GM12878 (cell line): ENCODE measurements at regions of chr4 and their contacts with region 1.

Region 1: GRCh38 chr4:147096667-147097604 is 151.3 kb upstream of the TTC29 start:
- DNase-seq: no peak
- ATAC-seq: peak; percentile 64
- H3K4me3 ChIP-seq: no peak overlapping the region
- H3K27ac ChIP-seq: no peak overlapping the region
- H3K4me1 ChIP-seq: no peaks in the 10 kb centered on the region
- H3K27me3 ChIP-seq: peaks cover 0 to 1% of the 10 kb centered on the region in 2 experiments; a peak in 2 of 4 replicates
- CTCF ChIP-seq: peak; percentile 32 to 66 (median 43); a peak in 5 of 6 replicates
- EP300 ChIP-seq: no peak
- POLR2A ChIP-seq: no peak
- RAD21 ChIP-seq: peak; percentile 86

Region 2: GRCh38 chr4:146333187-146333894 is 763.6 kb before region 1 on chr4:
- CTCF ChIA-PET with region 1: interaction called, 3 read pairs
- POLR2A ChIA-PET with region 1: no interaction called
- RAD21 ChIA-PET with region 1: interaction called, 5 read pairs
- SMC1A ChIA-PET with region 1: interaction called, 4 read pairs
- in situ Hi-C with region 1: loop called (anchors 10 kb)
- intact Hi-C with region 1: no loop called
- DNase-seq: peak; percentile 59
- ATAC-seq: peak; percentile 88
- H3K4me3 ChIP-seq: peak overlapping the region; percentile 54
- H3K27ac ChIP-seq: peak overlapping the region; percentile 38
- H3K4me1 ChIP-seq: peaks cover 13% of the 10 kb centered on the region; the same call in 1 of the 2 replicates
- H3K27me3 ChIP-seq: no peaks in the 10 kb centered on the region
- CTCF ChIP-seq: no peak
- EP300 ChIP-seq: no peak
- POLR2A ChIP-seq: no peak
- RAD21 ChIP-seq: no peak

Region 3: DNA sequence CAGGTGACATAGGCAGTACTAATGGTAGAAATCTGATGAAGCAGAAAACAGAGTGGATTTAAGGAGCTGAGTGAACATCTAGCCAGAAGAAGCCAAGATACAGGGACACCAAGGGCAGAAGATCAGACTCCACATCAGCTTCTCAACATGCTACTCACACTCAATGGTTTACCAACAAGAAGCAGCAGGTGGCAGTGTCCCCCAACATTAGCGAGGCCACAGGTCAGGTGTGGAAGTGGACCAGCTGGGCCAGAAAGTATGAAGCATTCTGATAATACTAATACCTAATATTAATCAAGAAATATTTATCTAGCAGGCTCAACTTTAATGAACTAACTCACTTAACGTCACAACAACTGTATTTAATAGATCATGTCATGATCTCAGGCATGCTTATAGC is 77.9 kb before region 1 on chr4:
- CTCF ChIA-PET with region 1: interaction called, 125 read pairs
- POLR2A ChIA-PET with region 1: no interaction called
- RAD21 ChIA-PET with region 1: interaction called, 51 read pairs
- SMC1A ChIA-PET with region 1: interaction called, 61 read pairs
- in situ Hi-C with region 1: loop called (anchors 5 kb)
- intact Hi-C with region 1: loop called (anchors 1 kb)
- DNase-seq: no peak
- ATAC-seq: peak; percentile 97
- H3K4me3 ChIP-seq: no peak overlapping the region
- H3K27ac ChIP-seq: no peak overlapping the region
- H3K4me1 ChIP-seq: no peaks in the 10 kb centered on the region
- H3K27me3 ChIP-seq: no peaks in the 10 kb centered on the region; a peak in 1 of 4 replicates
- CTCF ChIP-seq: peak; percentile 64 to 78 (median 71)
- EP300 ChIP-seq: no peak
- POLR2A ChIP-seq: no peak
- RAD21 ChIP-seq: peak; percentile 90

Region 4: DNA sequence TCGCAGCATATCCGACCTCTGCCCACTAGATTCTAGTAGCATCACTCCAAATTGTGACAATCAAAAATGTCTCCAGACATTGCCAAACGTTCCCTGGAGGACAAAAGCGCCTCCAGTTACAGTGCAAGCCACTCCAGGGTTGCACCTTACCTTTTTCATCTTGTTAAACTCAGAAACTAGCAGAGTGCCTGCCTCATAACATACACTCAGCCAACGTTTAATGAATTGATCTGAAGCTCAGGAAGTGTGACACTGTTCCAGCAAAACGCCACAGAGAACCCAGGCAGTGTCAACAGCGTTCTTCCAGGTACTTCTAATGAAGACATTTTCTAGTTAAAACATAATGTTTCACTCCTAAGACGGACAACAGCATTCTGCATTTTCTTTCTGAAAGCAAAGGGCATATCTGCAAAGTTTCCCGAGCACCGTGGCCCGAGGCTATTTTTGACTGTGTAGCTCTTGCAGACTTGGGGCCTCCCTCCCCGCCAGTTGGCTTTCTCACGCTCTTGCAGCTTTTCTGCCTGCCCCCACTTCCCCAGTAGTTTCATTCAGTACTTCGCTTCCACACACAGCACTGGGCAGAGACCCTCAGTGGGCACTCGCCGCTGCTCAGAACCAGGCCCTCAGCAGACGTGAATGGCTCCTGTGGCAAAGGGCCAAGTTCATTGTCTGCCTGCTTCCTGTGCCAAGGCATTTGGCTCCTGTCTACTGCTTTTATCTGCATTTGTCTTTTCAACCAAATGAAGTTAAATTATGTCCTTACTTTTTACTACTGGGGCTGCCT is 17.9 kb before region 1 on chr4:
- CTCF ChIA-PET with region 1: interaction called, 15 read pairs
- POLR2A ChIA-PET with region 1: no interaction called
- RAD21 ChIA-PET with region 1: no interaction called
- SMC1A ChIA-PET with region 1: interaction called, 4 read pairs
- in situ Hi-C with region 1: no loop called
- intact Hi-C with region 1: no loop called
- DNase-seq: no peak
- ATAC-seq: no peak
- H3K4me3 ChIP-seq: no peak overlapping the region
- H3K27ac ChIP-seq: no peak overlapping the region
- H3K4me1 ChIP-seq: no peaks in the 10 kb centered on the region
- H3K27me3 ChIP-seq: no peaks in the 10 kb centered on the region; a peak in 1 of 4 replicates
- CTCF ChIP-seq: no peak
- EP300 ChIP-seq: no peak
- POLR2A ChIP-seq: no peak
- RAD21 ChIP-seq: no peak

Region 5: GRCh38 chr4:147111033-147111367 is 14.1 kb after region 1 on chr4:
- CTCF ChIA-PET with region 1: interaction called, 19 read pairs
- POLR2A ChIA-PET with region 1: no interaction called
- RAD21 ChIA-PET with region 1: interaction called, 3 read pairs
- SMC1A ChIA-PET with region 1: interaction called, 3 read pairs
- in situ Hi-C with region 1: no loop called
- intact Hi-C with region 1: no loop called
- DNase-seq: no peak
- ATAC-seq: no peak
- H3K4me3 ChIP-seq: no peak overlapping the region
- H3K27ac ChIP-seq: no peak overlapping the region
- H3K4me1 ChIP-seq: no peaks in the 10 kb centered on the region
- H3K27me3 ChIP-seq: no peaks in the 10 kb centered on the region
- CTCF ChIP-seq: no peak
- EP300 ChIP-seq: no peak
- POLR2A ChIP-seq: no peak
- RAD21 ChIP-seq: no peak

Region 6: GRCh38 chr4:147207911-147208310 is 111.0 kb after region 1 on chr4:
- CTCF ChIA-PET with region 1: no interaction called
- POLR2A ChIA-PET with region 1: no interaction called
- RAD21 ChIA-PET with region 1: no interaction called
- SMC1A ChIA-PET with region 1: no interaction called
- in situ Hi-C with region 1: no loop called
- intact Hi-C with region 1: no loop called
- DNase-seq: no peak
- ATAC-seq: no peak
- H3K4me3 ChIP-seq: no peak overlapping the region
- H3K27ac ChIP-seq: no peak overlapping the region
- H3K4me1 ChIP-seq: no peaks in the 10 kb centered on the region
- H3K27me3 ChIP-seq: no peaks in the 10 kb centered on the region
- CTCF ChIP-seq: no peak
- EP300 ChIP-seq: no peak
- POLR2A ChIP-seq: no peak
- RAD21 ChIP-seq: no peak